ENCODE measurements at regions of chr19 and their contacts with region 1.

Region 1: GRCh38 chr19:4065430-4066175 is 1.1 kb downstream of the ZBTB7A start:
- DNase-seq: peak; percentile 86 to 99 (median 96)
- H3K4me3 ChIP-seq: peak overlapping the region; percentile 59 to 97 (median 86)
- H3K27ac ChIP-seq: peak overlapping the region in 53 of 59 donors; percentile 68 to 100 (median 97)
- H3K27me3 ChIP-seq: no peaks in the 10 kb centered on the region
- CTCF ChIP-seq: peak in 10 of 56 donors; percentile 6 to 24 (median 14)

Region 2: GRCh38 chr19:3932931-3933810 is 132.4 kb before region 1 on chr19 and contains the start of gene NMRK2:
- intact Hi-C with region 1: no loop called
- DNase-seq: no peak
- H3K4me3 ChIP-seq: peak within 1 kb of the TSS in 28 of 59 donors; percentile 7 to 50 (median 28)
- H3K27ac ChIP-seq: no peak within 1 kb of the TSS
- H3K27me3 ChIP-seq: peaks cover 0 to 28% (median 12%) of the 10 kb centered on the region in 45 donors
- CTCF ChIP-seq: no peak
- total RNA-seq, gene NMRK2: 0.36 to 1.5 (median 0.75) TPM in 11 of 120 experiments, not detected in the others

Region 3: GRCh38 chr19:4007021-4007835 is 58.4 kb before region 1 on chr19 and contains the start of gene PIAS4:
- intact Hi-C with region 1: loop called in 1 of 2 experiments (anchors 2 kb)
- DNase-seq: peak; percentile 89 to 96 (median 94)
- H3K4me3 ChIP-seq: peak within 1 kb of the TSS; percentile 64 to 100 (median 93)
- H3K27ac ChIP-seq: peak within 1 kb of the TSS; percentile 87 to 99 (median 97)
- H3K27me3 ChIP-seq: no peaks in the 10 kb centered on the region
- CTCF ChIP-seq: peak in 26 of 56 donors; percentile 5 to 42 (median 22)
- total RNA-seq, gene PIAS4: 24.8 to 57.8 (median 38.6) TPM

Region 4: GRCh38 chr19:4123615-4124568 is 58.3 kb after region 1 on chr19 and contains the start of gene MAP2K2:
- intact Hi-C with region 1: loop called (anchors 5 kb)
- DNase-seq: peak; percentile 87 to 98 (median 94)
- H3K4me3 ChIP-seq: peak within 1 kb of the TSS; percentile 55 to 87 (median 72)
- H3K27ac ChIP-seq: peak within 1 kb of the TSS in 57 of 59 donors; percentile 25 to 96 (median 85)
- H3K27me3 ChIP-seq: no peaks in the 10 kb centered on the region
- CTCF ChIP-seq: peak in 37 of 56 donors; percentile 9 to 65 (median 31)
- total RNA-seq, gene MAP2K2: 118 to 197 (median 143) TPM